ENCODE measurements at regions of chr4 and their contacts with region 1.

Region 1: DNA sequence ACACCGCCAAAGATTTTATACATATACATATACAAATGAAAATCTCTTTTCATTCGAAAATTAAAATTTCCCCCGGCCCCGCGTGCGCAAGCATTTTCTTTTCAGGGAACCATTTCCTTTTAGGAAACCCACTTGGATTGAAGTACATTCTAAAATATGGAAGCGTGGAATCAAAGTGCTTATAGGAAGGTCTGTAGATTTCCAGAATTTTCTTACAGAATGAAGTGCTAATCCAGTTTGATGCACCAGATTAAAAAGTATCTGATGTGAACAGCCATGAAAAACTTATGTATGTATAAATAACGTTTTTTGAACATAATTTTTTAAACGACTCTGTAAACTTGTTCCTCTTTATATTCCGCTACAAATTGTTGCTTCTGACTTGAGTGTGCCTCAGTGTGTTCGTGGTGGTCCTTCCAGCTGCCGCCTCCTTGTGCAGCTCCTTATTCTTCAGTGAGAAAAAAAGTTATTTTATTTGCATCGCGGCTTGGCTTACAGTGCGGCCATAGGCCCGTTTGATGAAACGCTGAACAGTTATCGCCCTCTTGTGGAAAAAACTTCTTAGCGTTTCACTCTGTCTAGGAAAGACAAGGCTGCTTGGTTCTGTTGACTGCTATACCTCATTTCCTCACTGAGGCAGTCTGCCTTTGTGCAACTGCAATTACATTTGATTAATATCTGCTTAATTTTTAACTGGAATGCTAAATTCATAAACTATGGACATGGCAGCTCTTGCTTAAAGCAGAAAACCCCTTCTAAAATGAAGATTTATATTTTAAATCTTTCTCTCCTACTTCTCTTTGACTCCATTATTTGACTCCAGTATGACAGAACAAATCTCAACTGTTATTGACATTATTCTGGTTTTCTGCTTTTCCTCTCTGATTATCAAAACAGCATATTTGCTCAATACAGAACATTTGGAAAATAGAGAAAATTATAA is 4.7 kb upstream of the NKX6-1 start:
- DNase-seq: no peak
- H3K4me3 ChIP-seq: peak overlapping the region; percentile 81 to 92 (median 87)
- H3K27ac ChIP-seq: peak overlapping the region; percentile 92 to 97 (median 94)
- H3K4me1 ChIP-seq: peaks cover 12 to 59% (median 29%) of the 10 kb centered on the region in 4 donors
- H3K27me3 ChIP-seq: peaks cover 0 to 46% (median 3%) of the 10 kb centered on the region in 4 donors
- CTCF ChIP-seq: peak; percentile 74 to 77 (median 75)
- EP300 ChIP-seq: no peak
- POLR2A ChIP-seq: no peak

Region 2: DNA sequence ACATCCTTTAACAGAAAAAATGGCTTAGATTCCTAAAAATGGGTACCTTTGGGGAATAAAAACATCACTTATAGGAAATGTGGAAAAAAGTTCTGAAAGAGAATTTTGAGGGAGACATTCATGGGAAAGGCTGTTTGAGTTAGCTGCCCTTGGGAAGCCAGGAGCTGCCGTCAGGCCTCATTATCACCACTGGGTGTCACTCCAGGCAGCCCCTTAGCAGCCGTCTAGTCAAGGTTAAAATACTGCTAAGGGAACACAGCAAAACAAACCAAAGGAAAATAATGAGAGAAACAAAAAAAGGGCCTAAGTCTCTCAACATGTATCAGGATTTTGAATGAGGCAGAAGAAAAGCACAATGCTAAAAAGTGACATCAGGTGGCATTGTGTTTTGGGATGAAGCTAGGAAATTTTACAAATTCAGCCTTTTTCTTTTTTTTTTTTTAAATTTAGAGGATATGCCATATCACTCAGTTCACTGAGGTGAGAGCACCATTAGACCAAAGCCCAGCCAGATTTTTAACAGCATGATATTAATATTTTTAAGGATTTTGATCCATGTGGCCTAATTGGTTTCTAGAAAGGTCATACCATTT is 732.6 kb before region 1 on chr4:
- intact Hi-C with region 1: loop called (anchors 5 kb)
- DNase-seq: no peak
- H3K4me3 ChIP-seq: no peak overlapping the region
- H3K27ac ChIP-seq: no peak overlapping the region
- H3K4me1 ChIP-seq: no peaks in the 10 kb centered on the region
- H3K27me3 ChIP-seq: no peaks in the 10 kb centered on the region
- CTCF ChIP-seq: peak; percentile 59 to 78 (median 75)
- EP300 ChIP-seq: no peak
- POLR2A ChIP-seq: no peak

Region 3: GRCh38 chr4:84159762-84160161 is 344.0 kb before region 1 on chr4:
- intact Hi-C with region 1: loop called (anchors 5 kb)
- DNase-seq: no peak
- H3K4me3 ChIP-seq: no peak overlapping the region
- H3K27ac ChIP-seq: peak overlapping the region; percentile 42 to 71 (median 62)
- H3K4me1 ChIP-seq: peaks cover 0 to 68% (median 42%) of the 10 kb centered on the region in 4 donors
- H3K27me3 ChIP-seq: no peaks in the 10 kb centered on the region
- CTCF ChIP-seq: peak; percentile 51 to 69 (median 62)
- EP300 ChIP-seq: no peak
- POLR2A ChIP-seq: no peak

Region 4: DNA sequence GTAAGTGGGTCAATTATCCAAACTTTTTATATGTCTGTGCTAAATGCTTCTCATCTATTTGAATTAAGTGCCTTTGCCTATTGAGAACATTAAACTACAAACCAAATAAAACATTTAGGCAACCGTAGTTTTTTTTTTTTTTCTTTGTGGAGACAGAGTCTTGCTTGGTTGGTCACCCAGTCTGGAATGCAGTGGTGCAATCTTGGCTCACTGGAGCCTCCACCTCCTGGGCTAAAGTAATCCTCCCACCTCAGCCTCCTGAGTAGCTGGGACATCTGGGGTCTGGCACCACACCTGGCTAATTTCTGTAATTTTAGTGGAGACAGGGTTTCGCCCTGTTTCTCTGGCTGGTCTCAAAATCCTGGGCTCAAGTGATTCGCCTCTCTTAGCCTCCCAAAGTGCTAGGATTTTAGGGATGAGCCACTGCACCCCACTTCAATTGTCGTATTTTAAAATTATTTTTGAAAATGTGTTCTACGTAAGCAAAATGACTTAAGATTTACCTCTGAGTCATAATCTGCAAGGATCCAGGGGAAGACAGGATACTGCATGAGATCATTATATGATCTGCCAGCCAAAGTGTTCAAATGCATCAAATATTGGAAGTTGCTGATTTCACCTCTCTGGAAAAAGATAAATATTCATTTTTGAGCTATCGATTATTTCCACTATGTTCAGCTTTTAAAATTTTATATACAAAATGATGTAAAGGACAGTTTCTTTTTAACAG is 204.8 kb after region 1 on chr4:
- intact Hi-C with region 1: no loop called
- DNase-seq: no peak
- H3K4me3 ChIP-seq: no peak overlapping the region
- H3K27ac ChIP-seq: no peak overlapping the region
- H3K4me1 ChIP-seq: no peaks in the 10 kb centered on the region
- H3K27me3 ChIP-seq: no peaks in the 10 kb centered on the region
- CTCF ChIP-seq: no peak
- EP300 ChIP-seq: no peak
- POLR2A ChIP-seq: no peak

Region 5: GRCh38 chr4:84826681-84827080 is 322.9 kb after region 1 on chr4:
- intact Hi-C with region 1: no loop called
- DNase-seq: no peak
- H3K4me3 ChIP-seq: no peak overlapping the region
- H3K27ac ChIP-seq: no peak overlapping the region
- H3K4me1 ChIP-seq: no peaks in the 10 kb centered on the region
- H3K27me3 ChIP-seq: no peaks in the 10 kb centered on the region
- CTCF ChIP-seq: no peak
- EP300 ChIP-seq: no peak
- POLR2A ChIP-seq: no peak